SK-N-SH (cell line): ENCODE measurements at regions of chr12 and their contacts with region 1.

Region 1: GRCh38 chr12:122399592-122400373 is 22.7 kb downstream of the CLIP1 start:
- DNase-seq: peak; percentile 66
- H3K4me3 ChIP-seq: peak overlapping the region in 1 of 2 experiments; percentile 42; a peak in 2 of 4 replicates
- H3K27ac ChIP-seq: peak overlapping the region; percentile 77 to 99
- H3K4me1 ChIP-seq: peaks cover 10 to 23% of the 10 kb centered on the region in 2 experiments
- H3K27me3 ChIP-seq: no peaks in the 10 kb centered on the region
- CTCF ChIP-seq: peak; percentile 79
- EP300 ChIP-seq: no peak
- RAD21 ChIP-seq: peak; percentile 89

Region 2: DNA sequence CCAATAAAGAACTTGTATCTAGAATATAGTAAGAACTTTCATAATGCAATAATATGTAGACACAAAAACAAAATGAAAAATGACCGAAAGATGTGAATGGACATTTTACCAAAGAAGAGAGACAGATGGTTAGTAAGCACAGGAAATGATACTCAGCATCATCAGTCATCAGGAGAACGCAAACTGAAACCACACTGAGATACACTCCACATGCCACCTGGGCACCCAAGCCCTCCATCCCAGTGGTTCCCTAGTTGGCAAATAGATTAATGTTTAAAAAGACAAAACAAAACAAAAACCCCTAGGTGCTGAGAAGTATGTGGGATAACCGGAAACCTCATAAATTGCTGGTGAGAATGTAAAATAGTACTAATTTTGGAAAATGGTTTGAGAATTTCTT is 106.7 kb before region 1 on chr12:
- CTCF ChIA-PET with region 1: no interaction called
- POLR2A ChIA-PET with region 1: no interaction called
- DNase-seq: no peak
- H3K4me3 ChIP-seq: no peak overlapping the region
- H3K27ac ChIP-seq: no peak overlapping the region
- H3K4me1 ChIP-seq: no peaks in the 10 kb centered on the region
- H3K27me3 ChIP-seq: no peaks in the 10 kb centered on the region
- CTCF ChIP-seq: no peak
- EP300 ChIP-seq: no peak
- RAD21 ChIP-seq: no peak

Region 3: DNA sequence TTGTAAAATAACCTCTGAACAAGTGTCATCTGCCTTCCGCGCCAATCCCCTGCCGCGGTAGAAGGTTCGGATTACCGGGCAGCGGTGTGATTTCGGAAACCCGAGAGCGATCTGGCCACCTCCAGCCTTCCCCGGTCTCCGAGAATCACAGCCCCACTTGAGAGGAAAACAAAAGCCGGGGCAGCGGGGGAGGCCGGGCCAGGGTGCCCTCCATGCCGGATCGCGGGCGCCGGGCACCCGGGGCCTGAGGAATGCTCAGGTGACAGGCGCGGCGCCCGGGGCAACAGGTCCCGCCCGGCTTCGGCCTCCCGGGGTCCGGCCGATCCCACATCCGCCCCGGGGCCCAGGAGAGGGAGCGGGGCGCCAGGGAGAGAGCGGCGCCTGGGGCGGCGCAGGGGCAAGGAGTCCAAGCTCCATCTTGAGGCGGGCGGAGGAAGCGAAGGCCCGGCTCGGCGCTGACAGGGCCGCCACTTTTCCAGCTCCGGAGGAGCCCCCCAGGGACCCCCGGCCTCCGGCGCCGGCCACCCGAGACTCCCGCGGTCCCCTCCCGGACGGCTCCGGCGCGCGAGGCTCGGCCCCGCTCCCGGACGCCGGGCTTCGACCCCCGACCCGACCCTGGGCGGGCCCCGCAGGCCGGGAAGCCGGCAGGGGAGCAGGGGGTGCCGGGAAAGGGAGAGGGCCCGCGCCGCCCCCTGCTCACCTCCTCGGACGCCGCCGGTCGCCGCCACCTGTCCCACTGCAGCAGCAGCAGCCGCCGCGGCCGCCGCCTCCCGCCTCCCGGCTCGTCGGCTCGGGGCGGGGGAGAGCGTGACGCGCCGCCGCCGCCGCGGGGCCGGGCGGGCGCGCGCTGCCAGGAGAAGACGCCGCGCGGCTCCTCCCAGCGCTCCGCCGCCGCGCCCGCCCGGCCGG is 22.3 kb after region 1 on chr12 and contains the start of gene CLIP1:
- CTCF ChIA-PET with region 1: interaction called, 12 read pairs
- POLR2A ChIA-PET with region 1: no interaction called
- DNase-seq: peak; percentile 87
- H3K4me3 ChIP-seq: peak within 1 kb of the TSS; percentile 67 to 79
- H3K27ac ChIP-seq: peak within 1 kb of the TSS; percentile 77 to 94
- H3K4me1 ChIP-seq: peaks cover 11 to 15% of the 10 kb centered on the region in 2 experiments; a peak in 2 of 4 replicates
- H3K27me3 ChIP-seq: no peaks in the 10 kb centered on the region
- CTCF ChIP-seq: peak; percentile 47
- EP300 ChIP-seq: no peak
- RAD21 ChIP-seq: peak; percentile 36
- polyA plus RNA-seq, gene CLIP1: 33.9 and 48.9 TPM in 2 replicates

Region 4: DNA sequence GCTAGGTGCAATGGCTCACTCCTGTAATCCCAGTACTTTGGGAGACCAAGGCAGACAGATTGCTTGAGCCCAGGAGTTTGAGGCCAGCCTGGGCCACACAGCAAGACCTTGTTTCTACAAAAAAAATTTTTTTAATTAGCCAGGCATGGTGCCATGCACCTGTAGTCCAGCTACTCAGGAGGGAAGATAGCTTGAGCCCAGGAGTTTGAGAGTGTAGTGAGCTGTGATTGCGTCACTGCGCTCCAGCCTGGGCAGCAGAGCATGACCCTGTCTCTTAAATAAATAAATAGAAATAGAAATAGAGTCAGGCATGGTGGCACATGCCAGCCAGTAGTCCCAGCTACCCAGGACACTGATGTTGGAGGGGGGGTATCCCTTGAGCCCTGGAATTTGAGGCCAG is 59.4 kb after region 1 on chr12:
- CTCF ChIA-PET with region 1: interaction called, 10 read pairs
- POLR2A ChIA-PET with region 1: no interaction called
- DNase-seq: no peak
- H3K4me3 ChIP-seq: no peak overlapping the region
- H3K27ac ChIP-seq: no peak overlapping the region
- H3K4me1 ChIP-seq: no peaks in the 10 kb centered on the region
- H3K27me3 ChIP-seq: no peaks in the 10 kb centered on the region
- CTCF ChIP-seq: no peak
- EP300 ChIP-seq: no peak
- RAD21 ChIP-seq: no peak

Region 5: DNA sequence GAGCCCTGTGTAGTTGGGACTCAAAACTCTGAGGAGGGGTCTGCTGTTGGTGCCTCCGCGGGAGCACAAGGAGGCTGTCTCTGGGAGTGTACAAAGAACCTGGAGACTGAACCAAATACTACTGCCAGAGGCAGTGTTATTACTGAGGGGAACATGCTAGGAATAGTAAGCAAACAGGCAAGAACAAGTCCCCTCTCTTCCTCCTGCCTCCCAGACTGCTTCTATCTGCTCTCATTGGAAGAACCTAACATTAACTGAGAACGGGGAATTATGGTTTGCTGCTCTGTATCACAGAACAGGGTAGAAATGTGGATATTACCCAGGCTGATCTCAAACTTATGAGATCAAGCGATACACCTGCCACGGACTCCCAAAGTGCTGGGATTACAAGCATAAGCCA is 979.6 kb after region 1 on chr12:
- CTCF ChIA-PET with region 1: no interaction called
- POLR2A ChIA-PET with region 1: no interaction called
- DNase-seq: no peak
- H3K4me3 ChIP-seq: no peak overlapping the region
- H3K27ac ChIP-seq: no peak overlapping the region
- H3K4me1 ChIP-seq: no peaks in the 10 kb centered on the region; a peak in 1 of 4 replicates
- H3K27me3 ChIP-seq: no peaks in the 10 kb centered on the region
- CTCF ChIP-seq: no peak
- EP300 ChIP-seq: no peak
- RAD21 ChIP-seq: no peak